Right cardiac atrium (tissue), 5 donors: ENCODE measurements at regions of chr3 and their contacts with region 1.

Region 1: GRCh38 chr3:23455084-23455483 is 252.0 kb downstream of the UBE2E2 start:
- DNase-seq: no peak
- ATAC-seq: peak; percentile 58 to 67
- H3K4me3 ChIP-seq: no peak overlapping the region
- H3K27ac ChIP-seq: no peak overlapping the region
- H3K4me1 ChIP-seq: no peaks in the 10 kb centered on the region
- H3K27me3 ChIP-seq: no peaks in the 10 kb centered on the region

Region 2: DNA sequence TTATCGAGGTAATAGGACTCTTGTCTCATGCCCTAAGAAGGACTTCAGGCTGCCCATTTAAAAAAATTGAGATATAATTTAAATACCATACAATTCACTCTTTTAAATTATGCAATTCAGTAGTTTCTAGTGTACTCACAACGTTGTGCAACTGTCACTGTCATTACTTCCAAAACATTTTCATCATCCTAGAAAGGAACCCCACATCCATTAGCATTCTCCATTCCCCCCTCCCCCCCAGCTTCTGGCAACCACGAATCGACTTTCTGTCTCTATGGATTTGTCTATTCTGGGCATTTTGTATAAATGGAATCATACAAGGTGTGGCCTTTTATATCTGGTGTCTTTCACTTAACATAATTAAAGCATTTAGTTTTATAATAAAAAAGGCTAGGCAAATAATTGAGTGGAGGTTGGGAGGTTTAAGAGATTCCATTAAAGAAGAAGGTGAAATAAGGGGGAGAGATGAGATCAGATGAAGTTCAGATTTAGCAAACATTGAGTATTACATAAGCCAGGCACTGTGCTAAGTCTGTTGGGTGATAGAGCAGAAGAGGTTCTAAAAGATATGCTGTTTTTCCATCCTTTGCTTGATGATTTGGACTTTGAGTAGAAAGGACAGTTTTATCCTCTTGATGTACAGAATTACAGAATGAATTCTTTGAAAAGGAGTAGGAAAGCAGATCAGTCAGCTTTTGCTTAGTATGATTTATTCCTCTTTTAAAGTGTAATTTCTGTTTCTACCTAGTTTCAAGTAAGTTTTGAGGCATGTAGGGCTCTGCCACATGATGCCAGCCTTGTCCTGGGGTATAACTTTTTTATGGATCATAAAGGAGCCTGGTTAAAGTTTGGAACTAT is 215.6 kb before region 1 on chr3:
- intact Hi-C with region 1: loop called in 1 of 4 experiments (anchors 10 kb)
- DNase-seq: no peak
- ATAC-seq: no peak
- H3K4me3 ChIP-seq: no peak overlapping the region
- H3K27ac ChIP-seq: no peak overlapping the region
- H3K4me1 ChIP-seq: no peaks in the 10 kb centered on the region
- H3K27me3 ChIP-seq: no peaks in the 10 kb centered on the region